Activated CD4-positive, alpha-beta memory T cell treated with anti-CD3 and anti-CD28 coated beads for 36 hours (primary cell): ENCODE measurements at regions of chr15 and their contacts with region 1.

Region 1: DNA sequence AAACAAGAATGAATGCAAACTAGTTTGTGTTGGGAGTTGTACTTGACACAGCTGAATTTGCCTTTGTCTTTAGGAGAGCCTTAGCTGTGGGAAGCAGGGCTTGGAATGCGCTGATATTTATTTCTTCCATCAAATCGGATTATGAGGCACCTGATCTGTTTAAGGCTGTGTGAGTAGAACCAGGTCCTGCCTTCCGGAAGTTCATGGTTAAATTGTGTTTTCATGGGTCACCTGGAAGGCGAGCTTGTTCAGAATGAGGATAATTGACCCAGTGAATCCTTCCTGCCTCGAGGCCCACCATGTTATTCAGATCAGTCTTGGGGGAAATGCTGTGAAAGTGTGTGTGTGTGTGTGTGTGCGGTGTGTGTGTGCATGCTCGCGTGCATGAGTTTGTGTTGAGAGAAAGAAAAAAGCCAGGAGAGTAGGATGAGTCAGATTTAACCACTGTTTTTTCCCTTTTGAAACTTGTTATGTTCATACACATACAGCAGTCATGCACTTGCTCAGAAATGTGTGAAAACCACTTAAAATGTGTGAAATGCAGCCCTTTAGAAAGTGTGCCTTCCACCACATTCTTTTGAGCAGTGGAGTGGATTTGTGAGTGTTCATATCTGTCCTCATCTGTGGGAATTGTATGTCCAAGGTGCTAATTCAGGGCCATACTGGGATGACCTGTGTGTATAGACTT is 36.7 kb downstream of the SMAD3 start:
- DNase-seq: peak; percentile 80
- H3K4me3 Mint-ChIP-seq: no peak overlapping the region
- H3K27ac Mint-ChIP-seq: no peak overlapping the region
- H3K4me1 Mint-ChIP-seq: peaks cover 28% of the 10 kb centered on the region
- H3K27me3 Mint-ChIP-seq: no peaks in the 10 kb centered on the region

Region 2: DNA sequence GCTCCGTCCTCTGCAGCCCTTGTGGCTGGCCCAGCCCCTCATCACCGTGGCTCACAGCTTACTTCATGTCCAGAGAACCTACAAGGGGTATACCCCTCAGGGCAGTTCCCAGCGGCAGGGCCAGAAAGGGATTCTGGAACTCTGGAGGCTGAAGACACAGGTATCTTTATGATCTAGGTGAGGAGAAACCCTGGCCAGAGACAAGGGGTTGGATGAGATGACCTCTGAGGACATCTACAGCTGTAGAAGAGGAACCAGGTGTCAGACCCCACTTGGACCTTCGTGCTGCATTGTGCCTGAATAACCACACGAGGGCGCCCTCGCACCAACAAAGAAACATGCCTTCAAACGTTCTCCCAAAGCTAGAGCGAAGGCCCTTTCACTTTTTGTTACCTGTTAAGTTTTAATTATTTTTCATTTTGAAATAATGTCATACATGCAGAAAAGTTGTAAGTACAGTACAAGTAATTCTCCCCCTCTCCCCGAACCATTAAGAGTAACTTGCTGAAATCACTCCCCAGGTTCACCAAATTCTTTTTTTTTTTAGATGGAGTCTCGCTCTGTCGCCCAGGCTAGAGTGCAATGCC is 155.4 kb before region 1 on chr15:
- CTCF ChIA-PET with region 1: interaction called, 10 read pairs
- POLR2A ChIA-PET with region 1: no interaction called
- intact Hi-C with region 1: no loop called
- DNase-seq: peak; percentile 83
- H3K4me3 Mint-ChIP-seq: no peak overlapping the region
- H3K27ac Mint-ChIP-seq: no peak overlapping the region
- H3K4me1 Mint-ChIP-seq: peaks cover 6% of the 10 kb centered on the region
- H3K27me3 Mint-ChIP-seq: no peaks in the 10 kb centered on the region

Region 3: GRCh38 chr15:67048281-67049279 is 53.5 kb before region 1 on chr15:
- CTCF ChIA-PET with region 1: no interaction called
- POLR2A ChIA-PET with region 1: no interaction called
- intact Hi-C with region 1: no loop called
- DNase-seq: no peak
- H3K4me3 Mint-ChIP-seq: no peak overlapping the region
- H3K27ac Mint-ChIP-seq: no peak overlapping the region
- H3K4me1 Mint-ChIP-seq: peaks cover 11% of the 10 kb centered on the region
- H3K27me3 Mint-ChIP-seq: no peaks in the 10 kb centered on the region

Region 4: DNA sequence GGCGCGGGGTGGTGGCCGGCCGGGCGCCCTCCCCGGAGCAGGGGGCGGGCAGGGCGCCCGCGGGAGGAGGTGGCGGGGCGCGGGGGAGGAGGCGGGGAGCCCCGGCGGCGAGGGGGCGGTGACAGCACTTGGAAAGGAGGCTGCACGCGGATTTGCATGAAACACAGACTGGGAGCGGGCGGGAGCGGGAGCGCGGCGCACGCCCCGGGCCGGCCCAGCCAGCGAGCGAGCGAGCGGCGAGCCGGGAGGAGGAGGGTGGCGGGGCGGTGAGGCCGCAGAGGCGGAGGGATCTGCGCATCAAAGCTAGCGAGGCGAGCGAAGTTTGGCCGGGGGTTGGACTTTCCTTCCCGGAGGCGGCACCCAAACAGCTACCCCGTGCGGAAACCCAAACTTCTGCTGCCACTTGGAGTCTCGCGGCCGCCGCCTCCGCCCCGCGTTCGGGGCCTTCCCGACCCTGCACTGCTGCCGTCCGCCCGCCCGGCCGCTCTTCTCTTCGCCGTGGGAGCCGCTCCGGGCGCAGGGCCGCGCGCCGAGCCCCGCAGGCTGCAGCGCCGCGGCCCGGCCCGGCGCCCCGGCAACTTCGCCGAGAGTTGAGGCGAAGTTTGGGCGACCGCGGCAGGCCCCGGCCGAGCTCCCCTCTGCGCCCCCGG is 36.5 kb before region 1 on chr15 and contains the start of gene SMAD3:
- CTCF ChIA-PET with region 1: interaction called, 5 read pairs
- POLR2A ChIA-PET with region 1: interaction called, 36 read pairs
- intact Hi-C with region 1: loop called (anchors 1 kb)
- DNase-seq: peak; percentile 86
- H3K4me3 Mint-ChIP-seq: peak within 1 kb of the TSS; percentile 95
- H3K27ac Mint-ChIP-seq: peak within 1 kb of the TSS; percentile 90
- H3K4me1 Mint-ChIP-seq: peaks cover 41% of the 10 kb centered on the region
- H3K27me3 Mint-ChIP-seq: peaks cover 10% of the 10 kb centered on the region
- total RNA-seq, gene SMAD3: 50.2 to 50.5 TPM

Region 5: DNA sequence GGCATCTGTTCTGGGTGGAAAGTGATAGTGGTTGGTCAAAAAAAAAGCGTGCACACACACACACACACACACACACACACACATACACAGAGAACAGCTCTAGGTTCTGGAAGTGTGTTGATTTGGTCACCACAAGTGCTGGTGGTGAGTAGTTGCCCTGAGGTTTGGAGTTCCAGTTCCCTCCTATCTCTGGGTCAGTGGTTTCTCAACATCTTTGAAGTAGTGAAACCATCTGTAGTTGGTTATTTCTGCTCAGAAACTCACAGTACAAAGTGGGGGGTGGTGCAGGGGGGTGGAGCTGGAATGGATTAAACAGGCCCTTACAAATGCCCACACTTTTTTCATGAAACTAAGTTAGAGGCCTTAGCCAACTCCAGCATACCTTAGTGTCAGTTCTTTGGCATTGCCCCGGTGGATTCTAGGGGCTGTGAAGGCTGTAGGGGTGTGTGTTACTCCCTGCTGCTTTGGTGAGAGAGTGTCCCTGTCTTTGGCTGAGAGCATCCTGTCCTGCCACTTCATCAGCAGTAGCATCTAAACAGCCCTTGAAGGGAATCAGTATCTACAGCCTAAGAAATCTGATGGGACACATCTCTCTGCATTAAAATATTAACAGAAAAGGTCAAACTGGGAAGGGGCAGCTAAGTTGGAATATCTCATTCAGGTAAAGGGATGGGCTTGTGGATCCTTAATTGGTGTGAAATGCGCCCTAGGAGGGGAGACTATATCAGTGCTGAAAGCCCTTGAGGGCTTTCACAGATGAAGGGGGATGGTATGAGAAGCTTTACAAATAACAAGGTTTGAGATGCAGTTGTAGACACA is 16.0 kb before region 1 on chr15:
- CTCF ChIA-PET with region 1: interaction called, 21 read pairs
- POLR2A ChIA-PET with region 1: interaction called, 117 read pairs
- intact Hi-C with region 1: loop called (anchors 1 kb)
- DNase-seq: peak; percentile 70
- H3K4me3 Mint-ChIP-seq: peak overlapping the region; percentile 1
- H3K27ac Mint-ChIP-seq: peak overlapping the region; percentile 82
- H3K4me1 Mint-ChIP-seq: peaks cover 98% of the 10 kb centered on the region
- H3K27me3 Mint-ChIP-seq: no peaks in the 10 kb centered on the region

Region 6: DNA sequence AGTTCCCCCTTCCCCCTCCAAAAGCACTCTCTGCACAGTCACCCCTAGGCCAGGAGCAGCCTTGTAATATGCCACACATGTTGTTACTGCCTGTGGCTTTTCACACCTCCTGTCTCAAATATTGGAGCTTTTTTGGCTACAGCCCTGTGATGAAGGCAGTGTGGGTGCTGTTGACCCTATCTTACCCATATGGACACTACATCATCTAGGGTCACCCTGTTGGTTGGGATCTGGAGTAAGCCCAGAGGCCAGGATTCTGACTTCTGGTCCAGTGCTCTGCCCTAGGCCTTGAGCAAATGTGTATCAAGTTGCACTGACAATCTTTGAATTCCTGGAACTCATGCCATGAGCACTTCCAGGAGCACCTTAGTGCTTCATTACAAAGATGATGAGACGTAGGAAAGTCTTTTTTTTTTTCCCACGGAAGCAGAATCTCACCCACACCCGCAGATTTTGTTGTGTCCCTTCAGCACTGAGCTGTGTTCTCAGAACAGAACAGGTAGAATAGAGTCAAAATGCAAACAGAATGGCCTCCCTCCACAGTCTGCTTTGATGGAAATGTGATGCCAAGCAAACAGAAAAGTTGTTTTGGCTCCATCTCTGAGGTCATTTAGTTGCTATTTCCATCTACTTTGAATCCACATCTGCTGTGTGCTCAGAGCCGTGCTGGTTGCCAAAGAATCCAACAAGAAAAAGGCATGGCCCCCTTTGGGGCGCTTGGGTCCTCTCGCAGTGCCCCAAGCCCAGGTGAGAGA is 13.0 kb after region 1 on chr15:
- CTCF ChIA-PET with region 1: interaction called, 7 read pairs
- POLR2A ChIA-PET with region 1: interaction called, 40 read pairs
- intact Hi-C with region 1: loop called (anchors 1 kb)
- DNase-seq: peak; percentile 60
- H3K4me3 Mint-ChIP-seq: peak overlapping the region; percentile 7
- H3K27ac Mint-ChIP-seq: peak overlapping the region; percentile 95
- H3K4me1 Mint-ChIP-seq: peaks cover 90% of the 10 kb centered on the region
- H3K27me3 Mint-ChIP-seq: no peaks in the 10 kb centered on the region

Region 7: GRCh38 chr15:67134067-67134838 is 32.2 kb after region 1 on chr15:
- CTCF ChIA-PET with region 1: interaction called, 3 read pairs
- POLR2A ChIA-PET with region 1: interaction called, 25 read pairs
- intact Hi-C with region 1: loop called (anchors 1 kb)
- DNase-seq: peak; percentile 79
- H3K4me3 Mint-ChIP-seq: peak overlapping the region; percentile 82
- H3K27ac Mint-ChIP-seq: peak overlapping the region; percentile 95
- H3K4me1 Mint-ChIP-seq: peaks cover 92% of the 10 kb centered on the region
- H3K27me3 Mint-ChIP-seq: no peaks in the 10 kb centered on the region

Region 8: DNA sequence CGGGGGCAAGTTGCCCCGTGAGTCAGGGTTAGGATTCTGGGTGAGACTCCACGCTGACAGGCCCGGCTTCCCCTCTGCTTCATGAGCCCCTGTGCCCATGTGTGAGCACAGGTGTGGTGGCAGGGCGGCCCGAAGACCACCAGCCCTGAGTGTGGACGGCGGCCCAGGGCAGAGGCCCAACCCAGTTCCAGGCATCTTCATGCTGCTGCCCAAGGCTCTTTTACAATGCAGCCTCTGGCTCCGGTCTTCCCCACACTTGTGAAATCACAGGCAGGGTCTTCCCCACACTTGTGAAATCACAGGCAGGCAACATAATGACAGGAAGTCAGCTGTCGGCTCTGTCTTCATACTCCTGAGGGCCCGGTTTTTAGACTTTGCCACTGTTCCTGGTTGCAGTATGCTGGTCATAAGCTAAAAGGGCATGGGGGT is 73.6 kb after region 1 on chr15:
- CTCF ChIA-PET with region 1: interaction called, 4 read pairs
- POLR2A ChIA-PET with region 1: interaction called, 6 read pairs
- intact Hi-C with region 1: loop called (anchors 1 kb)
- DNase-seq: peak; percentile 77
- H3K4me3 Mint-ChIP-seq: no peak overlapping the region
- H3K27ac Mint-ChIP-seq: peak overlapping the region; percentile 79
- H3K4me1 Mint-ChIP-seq: peaks cover 65% of the 10 kb centered on the region
- H3K27me3 Mint-ChIP-seq: no peaks in the 10 kb centered on the region